Naive thymus-derived CD4-positive, alpha-beta T cell (primary cell): ENCODE measurements at regions of chr16 and their contacts with region 1.

Region 1: GRCh38 chr16:27401768-27402568 is at the start of gene IL21R:
- DNase-seq: peak; percentile 72 to 91 (median 87)
- ATAC-seq: peak; percentile 91
- H3K4me3 ChIP-seq: peak within 1 kb of the TSS; percentile 88
- H3K4me3 Mint-ChIP-seq: peak within 1 kb of the TSS; percentile 76 to 99 (median 98)
- H3K27ac ChIP-seq: peak within 1 kb of the TSS; percentile 91
- H3K27ac Mint-ChIP-seq: peak within 1 kb of the TSS; percentile 89 to 99 (median 98)
- H3K4me1 ChIP-seq: peaks cover 38 to 44% of the 10 kb centered on the region in 2 donors
- H3K4me1 Mint-ChIP-seq: peaks cover 23 to 75% (median 70%) of the 10 kb centered on the region in 7 donors
- H3K27me3 ChIP-seq: no peaks in the 10 kb centered on the region
- H3K27me3 Mint-ChIP-seq: no peaks in the 10 kb centered on the region
- total RNA-seq, gene IL21R: 24.6 to 40.9 (median 31.4) TPM

Region 2: GRCh38 chr16:26747760-26748159 is 654.2 kb before region 1 on chr16:
- CTCF ChIA-PET with region 1: no interaction called
- POLR2A ChIA-PET with region 1: no interaction called
- intact Hi-C with region 1: no loop called
- DNase-seq: no peak
- ATAC-seq: no peak
- H3K4me3 ChIP-seq: no peak overlapping the region
- H3K4me3 Mint-ChIP-seq: no peak overlapping the region
- H3K27ac ChIP-seq: no peak overlapping the region
- H3K27ac Mint-ChIP-seq: no peak overlapping the region
- H3K4me1 ChIP-seq: no peaks in the 10 kb centered on the region
- H3K4me1 Mint-ChIP-seq: peaks cover 0 to 2% (median 0%) of the 10 kb centered on the region in 7 donors
- H3K27me3 ChIP-seq: no peaks in the 10 kb centered on the region
- H3K27me3 Mint-ChIP-seq: peaks cover 21 to 49% (median 47%) of the 10 kb centered on the region in 5 donors

Region 3: DNA sequence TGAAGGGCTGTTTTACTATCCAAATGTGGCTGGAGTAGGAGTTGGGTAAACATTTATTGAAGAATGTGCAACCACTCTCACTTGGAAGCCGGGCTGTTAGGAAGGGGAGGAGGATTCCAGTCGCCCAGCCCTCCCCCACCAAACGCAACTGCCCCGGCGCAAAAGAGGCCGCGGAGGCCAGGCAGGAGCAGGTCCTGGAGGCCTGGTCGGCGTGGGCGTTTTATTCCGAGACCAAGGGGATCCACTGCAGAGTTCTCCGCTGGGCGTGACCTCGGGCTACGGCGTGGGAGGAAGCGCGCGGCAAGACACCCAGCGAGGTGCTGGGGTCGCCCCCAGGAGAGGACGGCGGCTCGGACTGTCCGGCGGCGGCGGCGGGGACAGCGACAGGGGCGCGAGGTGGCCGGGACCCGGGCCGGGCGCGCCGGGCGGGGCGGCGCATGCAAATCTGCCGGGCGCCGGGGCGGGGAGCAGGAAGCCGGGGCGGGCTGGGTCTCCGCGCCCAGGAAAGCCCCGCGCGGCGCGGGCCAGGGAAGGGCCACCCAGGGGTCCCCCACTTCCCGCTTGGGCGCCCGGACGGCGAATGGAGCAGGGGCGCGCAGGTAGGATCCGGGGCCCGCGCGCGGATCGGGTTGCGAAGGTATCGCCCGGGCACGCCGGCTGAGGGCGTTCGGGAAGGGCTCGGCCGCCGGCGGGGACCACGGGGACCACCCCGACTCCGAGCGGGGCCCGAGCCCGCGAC is 88.4 kb before region 1 on chr16 and contains the start of gene IL4R:
- CTCF ChIA-PET with region 1: no interaction called
- POLR2A ChIA-PET with region 1: interaction called, 5 read pairs
- intact Hi-C with region 1: loop called in 1 of 2 experiments (anchors 2 kb)
- DNase-seq: peak; percentile 55 to 84 (median 68)
- ATAC-seq: peak; percentile 72
- H3K4me3 ChIP-seq: peak within 1 kb of the TSS; percentile 73
- H3K4me3 Mint-ChIP-seq: peak within 1 kb of the TSS; percentile 87 to 99 (median 97)
- H3K27ac ChIP-seq: peak within 1 kb of the TSS; percentile 99
- H3K27ac Mint-ChIP-seq: peak within 1 kb of the TSS; percentile 92 to 99 (median 96)
- H3K4me1 ChIP-seq: peaks cover 17 to 33% of the 10 kb centered on the region in 2 donors
- H3K4me1 Mint-ChIP-seq: peaks cover 29 to 52% (median 42%) of the 10 kb centered on the region in 7 donors
- H3K27me3 ChIP-seq: no peaks in the 10 kb centered on the region
- H3K27me3 Mint-ChIP-seq: peaks cover 0 to 3% (median 0%) of the 10 kb centered on the region in 5 donors
- total RNA-seq, gene IL4R: 158 to 498 (median 198) TPM

Region 4: GRCh38 chr16:27387724-27388123 is 14.2 kb before region 1 on chr16:
- CTCF ChIA-PET with region 1: interaction called, 5 read pairs
- POLR2A ChIA-PET with region 1: interaction called, 24 read pairs
- intact Hi-C with region 1: no loop called
- DNase-seq: peak in 1 of 9 donors; percentile 11
- ATAC-seq: no peak
- H3K4me3 ChIP-seq: no peak overlapping the region
- H3K4me3 Mint-ChIP-seq: no peak overlapping the region
- H3K27ac ChIP-seq: no peak overlapping the region
- H3K27ac Mint-ChIP-seq: no peak overlapping the region
- H3K4me1 ChIP-seq: no peaks in the 10 kb centered on the region
- H3K4me1 Mint-ChIP-seq: peaks cover 0 to 10% (median 6%) of the 10 kb centered on the region in 7 donors
- H3K27me3 ChIP-seq: no peaks in the 10 kb centered on the region
- H3K27me3 Mint-ChIP-seq: no peaks in the 10 kb centered on the region

Region 5: GRCh38 chr16:27426423-27427408 is 24.7 kb after region 1 on chr16:
- CTCF ChIA-PET with region 1: interaction called, 3 read pairs
- POLR2A ChIA-PET with region 1: interaction called, 12 read pairs
- intact Hi-C with region 1: loop called (anchors 1 to 2 kb)
- DNase-seq: peak in 8 of 9 donors; percentile 25 to 68 (median 55)
- ATAC-seq: peak; percentile 93
- H3K4me3 ChIP-seq: no peak overlapping the region
- H3K4me3 Mint-ChIP-seq: peak overlapping the region in 9 of 10 donors; percentile 9 to 70 (median 18)
- H3K27ac ChIP-seq: peak overlapping the region; percentile 22
- H3K27ac Mint-ChIP-seq: peak overlapping the region; percentile 30 to 86 (median 72)
- H3K4me1 ChIP-seq: peaks cover 15 to 21% of the 10 kb centered on the region in 2 donors
- H3K4me1 Mint-ChIP-seq: peaks cover 29 to 78% (median 62%) of the 10 kb centered on the region in 7 donors
- H3K27me3 ChIP-seq: no peaks in the 10 kb centered on the region
- H3K27me3 Mint-ChIP-seq: no peaks in the 10 kb centered on the region

Region 6: GRCh38 chr16:27455700-27456099 is 53.7 kb after region 1 on chr16:
- CTCF ChIA-PET with region 1: interaction called, 3 read pairs
- POLR2A ChIA-PET with region 1: interaction called, 4 read pairs
- intact Hi-C with region 1: loop called (anchors 2 kb)
- DNase-seq: peak in 6 of 9 donors; percentile 22 to 47 (median 32)
- ATAC-seq: peak; percentile 18
- H3K4me3 ChIP-seq: no peak overlapping the region
- H3K4me3 Mint-ChIP-seq: peak overlapping the region in 9 of 10 donors; percentile 3 to 75 (median 23)
- H3K27ac ChIP-seq: no peak overlapping the region
- H3K27ac Mint-ChIP-seq: peak overlapping the region; percentile 54 to 87 (median 79)
- H3K4me1 ChIP-seq: peaks cover 24 to 46% of the 10 kb centered on the region in 2 donors
- H3K4me1 Mint-ChIP-seq: peaks cover 30 to 75% (median 51%) of the 10 kb centered on the region in 7 donors
- H3K27me3 ChIP-seq: no peaks in the 10 kb centered on the region
- H3K27me3 Mint-ChIP-seq: no peaks in the 10 kb centered on the region